ENCODE measurements at regions of chr2 and their contacts with region 1.

Region 1: GRCh38 chr2:136384531-136385303 is 266.8 kb upstream of the CXCR4 start:
- DNase-seq: peak; percentile 45
- CTCF ChIP-seq: peak; percentile 69

Region 2: DNA sequence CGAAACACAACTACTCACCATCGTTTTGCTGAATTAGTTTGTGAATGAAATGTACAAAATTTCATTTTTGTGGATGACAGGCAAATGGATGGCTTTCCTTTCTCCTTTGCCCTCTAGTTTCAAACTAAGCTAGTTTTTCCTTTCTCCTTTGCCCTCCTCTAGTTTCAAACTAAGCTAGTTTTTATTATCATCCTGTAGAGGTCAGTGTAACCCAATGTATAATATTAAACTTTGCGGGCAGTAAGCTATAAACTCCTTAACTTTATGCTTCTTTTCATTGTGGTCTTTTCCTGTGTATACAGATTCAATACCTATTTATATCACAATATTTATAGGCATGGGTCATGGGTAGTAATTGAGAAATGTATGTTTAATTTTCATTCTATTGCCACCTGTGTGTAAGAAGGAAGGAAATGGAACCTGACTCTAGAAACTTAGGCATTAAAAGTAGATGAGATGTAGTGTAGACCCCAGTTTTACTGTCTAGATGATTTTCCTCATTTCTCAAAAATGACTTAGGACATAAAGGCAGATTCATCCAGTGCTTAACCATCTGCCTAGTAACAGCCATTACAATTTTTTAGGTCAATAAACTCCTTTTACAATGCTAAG is 1395.6 kb before region 1 on chr2:
- in situ Hi-C with region 1: loop called (anchors 25 kb)
- DNase-seq: peak; percentile 49
- CTCF ChIP-seq: no peak

Region 3: DNA sequence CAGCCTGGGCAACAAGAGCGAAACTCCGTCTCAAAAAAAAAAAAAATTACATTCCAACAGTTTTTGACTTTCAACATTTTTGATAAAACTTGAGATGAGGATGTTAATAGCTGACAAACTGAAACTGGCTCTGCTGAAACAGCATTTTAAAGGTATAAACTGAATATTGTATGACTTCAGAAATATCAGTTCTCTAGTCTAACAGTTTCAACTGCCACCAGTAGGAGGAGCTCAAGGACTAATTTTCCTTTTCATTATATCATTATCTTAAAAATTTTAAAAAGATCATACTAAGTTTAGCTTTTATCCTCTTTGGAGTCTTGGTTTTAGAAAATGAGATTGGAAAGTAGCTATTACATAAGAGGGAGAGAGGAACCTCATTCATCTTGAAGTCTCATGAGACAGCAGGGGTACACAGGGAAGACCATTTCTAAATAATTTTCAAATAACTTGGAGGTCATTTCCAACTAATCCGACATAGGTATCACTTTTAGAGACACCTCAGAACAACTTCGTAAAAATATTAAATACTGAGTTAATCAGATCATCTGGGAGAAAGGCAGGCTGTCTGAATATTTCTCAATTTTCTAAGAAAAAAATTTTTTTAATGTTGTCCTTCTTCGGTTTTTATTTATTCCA is 470.9 kb before region 1 on chr2:
- in situ Hi-C with region 1: loop called (anchors 5 kb)
- DNase-seq: peak; percentile 32
- CTCF ChIP-seq: peak; percentile 55

Region 4: DNA sequence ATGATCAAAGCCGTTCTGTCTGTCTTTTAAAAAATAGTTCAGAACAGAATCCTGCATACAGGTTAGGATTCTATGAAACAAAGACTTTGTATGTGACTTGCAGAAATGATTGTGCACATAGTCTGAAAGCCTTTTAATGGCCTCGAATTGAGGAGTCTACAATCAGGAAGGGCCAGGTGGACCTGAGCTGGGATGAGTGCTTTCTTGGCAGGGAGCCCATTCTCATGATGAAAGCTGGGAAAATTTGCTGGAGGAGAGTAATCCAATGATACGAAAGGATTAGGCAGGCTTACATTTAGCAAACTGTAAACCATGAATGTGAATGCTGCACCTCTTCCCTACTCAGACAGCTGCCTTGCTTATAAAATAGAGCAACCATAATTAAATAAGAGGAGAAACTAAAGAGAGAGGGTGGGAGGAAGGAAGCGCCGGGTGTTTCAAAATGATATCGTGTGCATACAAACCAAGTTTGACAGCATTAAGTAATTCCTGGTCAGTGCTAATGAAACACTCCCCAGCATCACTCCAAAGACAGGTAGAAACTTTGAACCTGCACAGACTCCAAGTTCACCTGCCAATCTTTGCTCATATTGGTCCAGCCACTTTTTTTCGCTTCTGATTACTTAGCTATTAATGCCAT is 243.1 kb before region 1 on chr2:
- in situ Hi-C with region 1: loop called (anchors 10 kb)
- DNase-seq: no peak
- CTCF ChIP-seq: no peak

Region 5: GRCh38 chr2:136255648-136256463 is 128.9 kb before region 1 on chr2:
- in situ Hi-C with region 1: loop called (anchors 10 kb)
- DNase-seq: peak; percentile 53
- CTCF ChIP-seq: peak; percentile 35

Region 6: DNA sequence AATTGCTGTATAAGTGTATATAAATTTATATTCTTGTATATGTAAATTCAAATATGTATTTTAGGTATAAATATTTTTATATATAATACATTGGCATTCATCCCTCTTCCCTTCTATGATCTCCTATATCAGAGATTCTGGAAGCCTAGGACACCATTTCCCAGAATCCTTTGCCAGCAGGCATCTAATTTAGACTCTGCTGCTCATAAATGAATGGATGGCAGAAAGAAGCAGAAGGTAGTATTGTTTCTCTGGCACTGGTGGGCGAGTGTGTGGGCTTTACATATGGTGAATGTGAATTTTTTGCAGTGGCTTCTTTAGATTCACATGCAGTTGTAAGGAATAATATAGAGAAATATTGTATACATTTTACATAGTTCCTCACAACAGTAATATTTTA is 165.5 kb after region 1 on chr2:
- in situ Hi-C with region 1: no loop called
- DNase-seq: no peak
- CTCF ChIP-seq: no peak

Measured in GM13976 (cell line).